Dorsolateral prefrontal cortex (tissue), 120 donors: ENCODE measurements at regions of chr19 and their contacts with region 1.

Region 1: DNA sequence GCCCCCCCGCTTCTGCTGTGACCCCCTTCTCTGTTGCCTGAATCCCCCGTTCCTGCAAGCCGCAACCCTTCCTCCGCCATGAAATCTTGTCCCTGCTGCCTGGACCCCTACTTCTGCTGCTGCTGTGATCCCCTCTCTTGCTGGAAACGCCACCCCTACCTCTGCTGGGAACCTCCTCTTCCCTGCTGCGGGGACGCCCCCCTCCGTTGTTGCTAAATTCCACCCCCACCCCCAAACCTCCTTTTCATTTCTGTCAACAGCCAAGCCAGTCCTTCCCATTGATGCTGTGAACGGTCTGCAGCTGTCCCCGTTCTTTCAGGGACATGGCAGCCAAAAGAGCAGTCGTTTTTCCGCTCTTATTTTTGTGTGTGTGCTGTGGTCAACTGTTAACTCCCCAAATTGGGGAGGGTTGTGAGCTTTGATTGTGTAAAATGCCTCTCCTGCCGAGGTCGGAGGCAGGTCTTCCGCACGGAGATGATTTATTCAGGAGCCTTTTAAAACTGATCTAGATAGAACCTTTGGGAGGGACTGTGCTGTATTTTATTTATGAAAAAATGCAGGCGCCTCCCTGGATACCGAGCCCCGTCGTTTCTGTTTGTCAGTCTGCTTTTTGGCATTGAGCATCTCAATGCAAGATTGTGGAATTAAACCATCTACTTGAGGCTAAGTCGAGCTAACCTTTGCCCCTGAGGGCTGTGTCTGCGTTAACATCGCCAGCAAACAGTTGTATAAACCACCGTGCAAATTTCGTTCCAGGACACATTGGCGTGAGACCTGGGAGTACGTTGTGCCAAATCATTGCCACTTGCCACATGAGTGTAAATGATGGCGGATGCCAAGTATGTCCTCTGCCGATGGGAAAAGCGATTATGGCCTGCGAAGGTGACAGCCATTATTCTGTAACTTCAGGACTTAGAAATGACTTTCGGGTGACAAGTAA is 27.9 kb upstream of the NDUFS7 start:
- DNase-seq: peak in 6 of 10 donors; percentile 41 to 71 (median 60)
- H3K4me3 ChIP-seq: peak overlapping the region; percentile 48 to 93 (median 80)
- H3K27ac ChIP-seq: peak overlapping the region; percentile 12 to 100 (median 98)
- H3K27me3 ChIP-seq: no peaks in the 10 kb centered on the region
- CTCF ChIP-seq: no peak

Region 2: GRCh38 chr19:1383311-1384084 is 27.7 kb after region 1 on chr19 and contains the start of gene NDUFS7:
- intact Hi-C with region 1: loop called in 1 of 2 experiments (anchors 2 kb)
- DNase-seq: peak; percentile 88 to 94 (median 92)
- H3K4me3 ChIP-seq: peak within 1 kb of the TSS; percentile 60 to 100 (median 95)
- H3K27ac ChIP-seq: peak within 1 kb of the TSS; percentile 88 to 100 (median 96)
- H3K27me3 ChIP-seq: no peaks in the 10 kb centered on the region
- CTCF ChIP-seq: peak in 28 of 56 donors; percentile 1 to 46 (median 22)
- total RNA-seq, gene NDUFS7: 105 to 222 (median 151) TPM

Region 3: DNA sequence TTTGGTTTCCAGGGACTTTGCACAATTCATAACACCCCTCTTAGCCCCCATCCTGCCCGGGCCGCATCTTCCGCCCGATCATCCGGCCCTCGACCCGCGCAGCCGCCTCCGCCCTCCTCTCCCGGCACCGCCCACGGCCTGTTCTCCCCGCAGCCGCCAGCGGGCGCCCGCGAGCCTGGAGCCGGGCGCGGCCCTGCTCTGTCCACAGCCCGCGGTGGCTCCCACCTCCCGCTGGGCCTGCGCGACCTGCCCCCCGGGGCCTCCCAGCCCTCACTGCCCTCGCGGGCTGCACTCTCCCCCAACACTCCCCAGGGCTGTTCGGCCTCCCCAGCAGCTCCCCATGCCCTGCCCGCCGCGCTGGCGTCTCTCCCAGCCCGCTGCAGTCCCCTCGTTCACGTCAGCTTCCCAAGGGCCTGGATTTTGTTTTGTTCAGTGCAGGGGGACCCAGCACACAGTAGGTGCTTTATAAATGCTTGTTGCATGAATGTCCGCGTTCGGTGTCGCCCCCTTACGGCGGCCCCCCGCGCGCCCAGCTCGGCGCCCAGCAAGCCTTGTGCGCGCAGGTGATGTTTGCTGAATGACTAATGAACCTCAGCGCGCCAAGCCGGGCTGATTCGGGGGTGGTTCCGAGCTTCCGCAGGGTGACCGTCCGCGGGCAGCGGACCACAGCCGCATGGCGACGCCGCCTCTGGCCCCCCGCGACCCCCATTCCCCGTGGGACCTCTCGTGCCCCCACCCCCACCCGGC is 89.5 kb after region 1 on chr19:
- intact Hi-C with region 1: no loop called
- DNase-seq: peak in 8 of 10 donors; percentile 45 to 87 (median 66)
- H3K4me3 ChIP-seq: peak overlapping the region; percentile 29 to 80 (median 67)
- H3K27ac ChIP-seq: peak overlapping the region in 55 of 59 donors; percentile 39 to 97 (median 81)
- H3K27me3 ChIP-seq: peaks cover 0 to 14% (median 0%) of the 10 kb centered on the region in 45 donors
- CTCF ChIP-seq: peak; percentile 58 to 98 (median 88)